ENCODE measurements at regions of chr1 and their contacts with region 1.

Region 1: DNA sequence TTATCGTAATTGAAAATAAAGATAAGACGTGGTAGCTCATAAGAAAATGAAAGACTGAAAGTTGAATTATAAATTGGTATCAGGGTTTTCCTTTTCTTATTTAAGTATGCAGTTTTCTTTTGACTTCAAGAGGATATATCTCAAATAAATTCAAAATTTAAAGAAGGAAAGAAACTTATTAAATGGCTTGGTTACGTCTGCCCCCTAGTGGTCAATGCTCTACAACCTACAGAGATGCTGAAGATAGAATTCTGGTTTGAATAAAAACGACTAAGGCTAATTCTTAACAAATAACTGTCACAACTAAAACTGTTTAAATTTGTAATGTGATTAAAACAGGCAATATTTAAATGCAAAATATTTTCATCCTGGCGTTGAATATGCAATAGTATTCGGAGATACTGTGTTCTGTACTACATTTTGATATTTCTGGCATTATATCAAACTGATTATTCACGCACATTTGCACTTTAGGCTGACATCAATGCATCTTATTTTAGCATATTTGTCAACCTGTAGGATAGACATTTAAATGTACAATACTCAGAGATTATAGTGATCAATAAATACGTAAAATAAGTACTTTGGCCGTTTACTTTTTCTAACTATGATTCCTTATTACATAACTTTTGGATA is 26.8 kb downstream of the IFI44 start:
- DNase-seq: peak; percentile 74
- H3K4me3 ChIP-seq: no peak overlapping the region
- H3K27ac ChIP-seq: no peak overlapping the region
- H3K4me1 ChIP-seq: no peaks in the 10 kb centered on the region
- H3K27me3 ChIP-seq: no peaks in the 10 kb centered on the region
- CTCF ChIP-seq: peak; percentile 34 to 85 (median 72)
- EP300 ChIP-seq: no peak
- POLR2A ChIP-seq: no peak

Region 2: GRCh38 chr1:78070758-78071157 is 605.7 kb before region 1 on chr1:
- intact Hi-C with region 1: no loop called
- DNase-seq: no peak
- H3K4me3 ChIP-seq: no peak overlapping the region
- H3K27ac ChIP-seq: peak overlapping the region in 2 of 4 donors; percentile 0 to 58
- H3K4me1 ChIP-seq: peaks cover 0 to 20% (median 10%) of the 10 kb centered on the region in 4 donors
- H3K27me3 ChIP-seq: no peaks in the 10 kb centered on the region
- CTCF ChIP-seq: no peak
- EP300 ChIP-seq: no peak
- POLR2A ChIP-seq: no peak

Region 3: DNA sequence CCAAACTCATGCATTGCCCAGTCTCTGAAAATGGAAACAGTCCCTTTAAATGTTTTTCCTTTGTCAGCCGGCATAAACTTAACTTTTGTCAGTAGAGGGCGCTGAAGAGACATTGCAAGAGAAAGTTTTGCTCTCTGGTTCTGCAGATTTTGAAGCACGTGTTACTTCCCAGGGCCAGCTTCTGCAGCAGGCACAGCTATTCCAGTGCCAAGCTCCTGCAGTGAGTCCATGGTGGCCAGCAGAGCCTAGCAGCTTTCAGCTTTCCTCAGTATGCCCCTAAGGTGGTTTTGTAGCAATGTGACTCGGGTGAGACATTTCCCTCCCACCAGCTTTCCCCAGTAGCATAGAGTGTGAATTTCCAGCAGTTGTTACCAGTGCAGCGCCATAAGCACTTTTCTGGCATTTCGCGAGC is 58.8 kb before region 1 on chr1:
- intact Hi-C with region 1: loop called (anchors 1 kb)
- DNase-seq: peak; percentile 83
- H3K4me3 ChIP-seq: no peak overlapping the region
- H3K27ac ChIP-seq: peak overlapping the region in 1 of 4 donors; percentile 69
- H3K4me1 ChIP-seq: peaks cover 0 to 20% (median 18%) of the 10 kb centered on the region in 4 donors
- H3K27me3 ChIP-seq: no peaks in the 10 kb centered on the region
- CTCF ChIP-seq: peak; percentile 53 to 90 (median 76)
- EP300 ChIP-seq: no peak
- POLR2A ChIP-seq: no peak

Region 4: GRCh38 chr1:78743626-78744025 is 67.2 kb after region 1 on chr1:
- intact Hi-C with region 1: no loop called
- DNase-seq: no peak
- H3K4me3 ChIP-seq: no peak overlapping the region
- H3K27ac ChIP-seq: no peak overlapping the region
- H3K4me1 ChIP-seq: no peaks in the 10 kb centered on the region
- H3K27me3 ChIP-seq: no peaks in the 10 kb centered on the region
- CTCF ChIP-seq: no peak
- EP300 ChIP-seq: no peak
- POLR2A ChIP-seq: no peak

Region 5: GRCh38 chr1:78760858-78761257 is 84.4 kb after region 1 on chr1:
- intact Hi-C with region 1: no loop called
- DNase-seq: no peak
- H3K4me3 ChIP-seq: no peak overlapping the region
- H3K27ac ChIP-seq: no peak overlapping the region
- H3K4me1 ChIP-seq: no peaks in the 10 kb centered on the region
- H3K27me3 ChIP-seq: no peaks in the 10 kb centered on the region
- CTCF ChIP-seq: no peak
- EP300 ChIP-seq: no peak
- POLR2A ChIP-seq: no peak